Panc1 (cell line): ENCODE measurements at regions of chr7 and their contacts with region 1.

Region 1: GRCh38 chr7:74479066-74479781 is 25.5 kb downstream of the GTF2IRD1 start:
- DNase-seq: no peak
- ATAC-seq: 0 out of 2 replicates have a peak, but pooled peaks have one; percentile 6
- H3K4me3 ChIP-seq: no peak overlapping the region; a peak in 1 of 4 replicates
- H3K27ac ChIP-seq: peak overlapping the region; percentile 95
- H3K4me1 ChIP-seq: peaks cover 72% of the 10 kb centered on the region
- H3K27me3 ChIP-seq: no peaks in the 10 kb centered on the region
- CTCF ChIP-seq: no peak

Region 2: DNA sequence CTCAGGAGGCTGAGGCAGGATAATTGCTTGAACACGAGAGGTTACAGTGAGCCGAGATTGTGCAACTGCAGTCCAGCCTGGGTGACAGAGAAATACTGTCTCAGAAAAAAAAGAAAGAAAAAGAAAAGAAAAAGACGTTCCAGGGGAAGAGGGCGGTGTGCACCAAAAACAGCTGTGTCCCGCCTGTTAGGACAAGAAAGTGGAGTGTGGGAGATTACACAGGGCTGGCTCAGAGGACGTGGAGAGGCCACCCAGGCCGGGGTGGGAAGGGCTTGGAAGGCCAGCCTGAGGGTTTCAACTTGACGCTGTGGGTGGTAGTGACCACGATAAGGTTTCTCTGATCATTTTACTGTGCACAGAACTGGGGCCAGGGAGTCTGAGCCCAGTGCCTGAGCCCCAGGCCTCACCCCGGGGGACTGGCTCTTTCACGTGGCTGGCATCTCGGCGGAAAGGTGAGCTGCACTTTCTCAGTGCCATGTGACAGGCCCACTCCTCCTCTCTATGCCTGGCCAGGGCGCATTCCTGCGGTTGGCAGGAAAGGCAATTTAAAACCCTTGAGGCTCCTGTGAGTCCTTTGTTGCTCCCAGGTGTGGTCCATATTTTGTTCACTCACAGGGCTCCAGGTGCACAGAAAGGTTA is 1413.5 kb after region 1 on chr7:
- CTCF ChIA-PET with region 1: no interaction called
- POLR2A ChIA-PET with region 1: interaction called, 10 read pairs
- in situ Hi-C with region 1: no loop called
- intact Hi-C with region 1: no loop called
- DNase-seq: no peak
- ATAC-seq: 0 out of 2 replicates have a peak, but pooled peaks have one; percentile 4
- H3K4me3 ChIP-seq: no peak overlapping the region
- H3K27ac ChIP-seq: no peak overlapping the region
- H3K4me1 ChIP-seq: no peaks in the 10 kb centered on the region
- H3K27me3 ChIP-seq: no peaks in the 10 kb centered on the region
- CTCF ChIP-seq: no peak